Endothelial cell of umbilical vein (primary cell): ENCODE measurements at regions of chr2 and their contacts with region 1.

Region 1: GRCh38 chr2:42328148-42328833 is 32.7 kb downstream of the COX7A2L start:
- DNase-seq: peak; percentile 54
- H3K4me3 ChIP-seq: no peak overlapping the region
- H3K27ac ChIP-seq: no peak overlapping the region
- H3K4me1 ChIP-seq: no peaks in the 10 kb centered on the region
- H3K27me3 ChIP-seq: no peaks in the 10 kb centered on the region
- CTCF ChIP-seq: peak; percentile 32 to 36
- POLR2A ChIP-seq: no peak

Region 2: DNA sequence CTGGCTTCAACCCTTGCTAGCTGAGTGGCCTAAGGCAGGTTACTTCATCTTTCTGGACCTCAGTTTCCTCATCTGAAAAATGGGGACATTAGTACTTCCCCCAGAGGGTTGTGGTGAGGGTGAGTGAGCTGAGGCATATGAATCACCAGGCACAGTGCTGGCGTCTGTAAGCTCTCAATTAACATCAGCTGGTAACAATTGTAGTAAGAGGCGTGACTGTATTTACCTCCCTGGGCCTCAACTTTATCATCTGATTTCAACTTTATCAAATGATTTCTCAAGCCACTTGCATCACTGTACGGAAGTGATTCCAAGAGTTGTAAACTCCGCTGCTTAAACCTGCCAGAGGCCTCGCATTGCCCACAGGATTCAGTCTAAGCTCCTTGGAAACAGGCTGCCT is 334.1 kb before region 1 on chr2:
- CTCF ChIA-PET with region 1: no interaction called
- POLR2A ChIA-PET with region 1: no interaction called
- dilution Hi-C with region 1: no loop called
- intact Hi-C with region 1: no loop called
- DNase-seq: no peak
- H3K4me3 ChIP-seq: no peak overlapping the region
- H3K27ac ChIP-seq: no peak overlapping the region
- H3K4me1 ChIP-seq: no peaks in the 10 kb centered on the region
- H3K27me3 ChIP-seq: peaks cover 3 to 5% of the 10 kb centered on the region in 2 experiments
- CTCF ChIP-seq: no peak
- POLR2A ChIP-seq: no peak

Region 3: DNA sequence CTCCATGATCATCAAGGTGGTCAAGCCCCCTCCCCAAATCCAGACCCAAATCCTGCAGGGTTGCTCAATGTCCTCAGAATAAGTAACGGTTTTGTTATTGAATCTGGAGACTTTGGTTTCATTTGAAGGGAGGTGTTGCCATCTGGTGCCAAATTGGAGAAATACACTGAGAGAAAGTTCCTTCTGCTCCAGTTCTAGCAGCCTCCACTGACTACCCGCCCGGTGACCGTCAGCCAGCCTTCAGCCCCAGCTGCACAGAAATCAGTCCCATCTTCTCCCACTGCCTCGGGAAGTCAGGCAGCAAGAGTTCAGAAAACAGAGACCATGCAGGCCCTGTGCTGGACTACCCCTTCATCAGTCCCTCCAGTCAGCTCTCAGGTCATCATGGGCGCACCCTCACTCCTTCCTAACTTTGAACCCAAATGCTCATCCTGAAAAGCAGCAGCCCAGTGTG is 241.8 kb before region 1 on chr2:
- CTCF ChIA-PET with region 1: interaction called, 369 read pairs
- POLR2A ChIA-PET with region 1: no interaction called
- dilution Hi-C with region 1: no loop called
- intact Hi-C with region 1: no loop called
- DNase-seq: peak; percentile 69
- H3K4me3 ChIP-seq: no peak overlapping the region
- H3K27ac ChIP-seq: no peak overlapping the region
- H3K4me1 ChIP-seq: no peaks in the 10 kb centered on the region
- H3K27me3 ChIP-seq: peaks cover 3 to 4% of the 10 kb centered on the region in 2 experiments
- CTCF ChIP-seq: peak; percentile 62
- POLR2A ChIP-seq: no peak

Region 4: DNA sequence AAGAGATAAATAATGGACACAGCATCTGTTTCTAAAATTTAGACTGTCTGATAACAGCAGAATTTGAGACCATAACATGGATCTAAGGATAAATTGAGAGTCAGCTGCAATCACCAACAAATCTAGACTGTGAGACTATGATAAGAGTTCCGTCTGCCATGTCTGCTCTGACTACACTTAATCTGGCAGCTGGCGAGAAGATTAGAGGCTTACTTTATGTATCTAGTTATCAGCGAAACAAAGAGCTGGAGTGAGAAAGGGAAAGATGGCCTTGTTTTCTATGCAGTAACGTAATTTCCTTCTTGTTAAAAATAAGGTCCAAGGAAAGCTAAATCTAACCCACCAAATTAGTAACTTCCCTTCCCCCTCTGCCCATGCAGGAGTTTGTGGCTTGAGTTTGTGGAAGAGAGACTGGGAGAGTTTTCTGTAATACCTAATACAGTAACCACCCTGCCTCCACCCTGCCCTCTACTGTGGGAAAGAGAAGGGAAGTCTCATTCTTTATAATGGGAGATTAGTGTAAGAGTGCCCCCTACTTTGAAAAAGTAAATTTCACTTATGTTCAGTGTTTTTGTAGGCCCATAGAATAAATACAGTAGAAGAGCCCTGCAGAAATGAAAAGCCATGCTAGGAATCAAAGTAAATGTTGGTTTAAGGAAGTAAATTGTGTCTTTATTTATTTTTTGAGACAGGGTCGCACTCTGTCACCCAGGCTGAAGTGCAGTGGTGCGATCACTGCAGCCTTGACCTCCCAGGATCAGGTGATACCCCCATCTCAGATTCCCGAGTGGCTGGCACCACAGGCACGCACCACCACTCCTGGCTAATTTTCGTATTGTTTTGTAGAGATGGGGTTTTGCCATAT is 131.7 kb before region 1 on chr2:
- CTCF ChIA-PET with region 1: interaction called, 10 read pairs
- POLR2A ChIA-PET with region 1: no interaction called
- dilution Hi-C with region 1: no loop called
- intact Hi-C with region 1: no loop called
- DNase-seq: peak; percentile 29
- H3K4me3 ChIP-seq: no peak overlapping the region
- H3K27ac ChIP-seq: no peak overlapping the region
- H3K4me1 ChIP-seq: peaks cover 9% of the 10 kb centered on the region
- H3K27me3 ChIP-seq: no peaks in the 10 kb centered on the region
- CTCF ChIP-seq: peak; percentile 11 to 28
- POLR2A ChIP-seq: no peak

Region 5: GRCh38 chr2:42342061-42342794 is 13.9 kb after region 1 on chr2:
- CTCF ChIA-PET with region 1: interaction called, 10 read pairs
- POLR2A ChIA-PET with region 1: no interaction called
- dilution Hi-C with region 1: no loop called
- intact Hi-C with region 1: no loop called
- DNase-seq: peak; percentile 57
- H3K4me3 ChIP-seq: no peak overlapping the region
- H3K27ac ChIP-seq: peak overlapping the region; percentile 51
- H3K4me1 ChIP-seq: peaks cover 17% of the 10 kb centered on the region
- H3K27me3 ChIP-seq: no peaks in the 10 kb centered on the region
- CTCF ChIP-seq: no peak
- POLR2A ChIP-seq: no peak

Region 6: DNA sequence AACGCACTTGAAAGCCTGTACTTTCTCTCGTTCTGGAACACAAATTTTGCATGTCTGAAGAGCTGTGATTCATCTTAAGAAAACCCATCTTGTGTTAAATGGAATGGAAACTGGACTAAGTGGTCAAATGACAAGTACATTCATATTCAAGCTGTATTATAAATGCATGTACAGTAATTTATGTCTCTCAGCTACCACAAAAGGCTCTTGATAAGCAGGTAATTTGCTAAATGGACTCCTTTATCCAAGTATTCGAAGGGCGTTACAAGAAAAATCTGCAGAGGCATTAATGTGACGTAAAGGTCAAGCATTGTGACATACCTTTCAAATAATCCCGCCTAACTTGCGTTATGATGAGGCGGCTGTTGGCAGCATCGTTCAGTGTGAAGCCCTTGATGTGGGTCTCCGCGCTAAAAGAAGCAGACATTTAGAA is 1577.1 kb after region 1 on chr2:
- CTCF ChIA-PET with region 1: no interaction called
- POLR2A ChIA-PET with region 1: no interaction called
- dilution Hi-C with region 1: no loop called
- intact Hi-C with region 1: no loop called
- DNase-seq: no peak
- H3K4me3 ChIP-seq: no peak overlapping the region
- H3K27ac ChIP-seq: no peak overlapping the region
- H3K4me1 ChIP-seq: no peaks in the 10 kb centered on the region
- H3K27me3 ChIP-seq: no peaks in the 10 kb centered on the region
- CTCF ChIP-seq: no peak
- POLR2A ChIP-seq: no peak